Activated CD4-positive, alpha-beta memory T cell treated with anti-CD3 and anti-CD28 coated beads for 36 hours (primary cell): ENCODE measurements at regions of chr3 and their contacts with region 1.

Region 1: DNA sequence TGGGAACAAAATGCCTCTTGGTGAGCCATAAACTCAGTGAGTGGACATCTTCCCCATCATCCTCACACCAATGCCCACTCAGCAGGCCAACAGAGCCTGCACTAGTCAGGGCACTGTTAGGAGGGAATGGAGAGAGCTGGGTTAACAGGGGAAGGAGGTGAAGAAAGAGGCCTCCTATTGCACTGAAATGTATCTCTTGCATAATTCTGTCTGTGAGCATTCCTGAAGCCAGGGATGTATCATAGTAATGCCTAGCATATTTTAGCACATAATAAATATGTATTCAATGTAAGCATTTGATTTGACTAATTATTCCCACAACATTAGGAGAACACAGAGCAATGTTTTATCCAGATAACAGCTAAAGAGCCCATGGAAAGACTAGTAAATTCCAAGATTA is 81.2 kb downstream of the ANO10 start:
- DNase-seq: no peak
- H3K4me3 Mint-ChIP-seq: no peak overlapping the region
- H3K27ac Mint-ChIP-seq: no peak overlapping the region
- H3K4me1 Mint-ChIP-seq: no peaks in the 10 kb centered on the region
- H3K27me3 Mint-ChIP-seq: no peaks in the 10 kb centered on the region

Region 2: GRCh38 chr3:43399034-43399433 is 141.6 kb before region 1 on chr3:
- CTCF ChIA-PET with region 1: no interaction called
- POLR2A ChIA-PET with region 1: no interaction called
- intact Hi-C with region 1: no loop called
- DNase-seq: no peak
- H3K4me3 Mint-ChIP-seq: no peak overlapping the region
- H3K27ac Mint-ChIP-seq: no peak overlapping the region
- H3K4me1 Mint-ChIP-seq: peaks cover 5% of the 10 kb centered on the region
- H3K27me3 Mint-ChIP-seq: no peaks in the 10 kb centered on the region

Region 3: DNA sequence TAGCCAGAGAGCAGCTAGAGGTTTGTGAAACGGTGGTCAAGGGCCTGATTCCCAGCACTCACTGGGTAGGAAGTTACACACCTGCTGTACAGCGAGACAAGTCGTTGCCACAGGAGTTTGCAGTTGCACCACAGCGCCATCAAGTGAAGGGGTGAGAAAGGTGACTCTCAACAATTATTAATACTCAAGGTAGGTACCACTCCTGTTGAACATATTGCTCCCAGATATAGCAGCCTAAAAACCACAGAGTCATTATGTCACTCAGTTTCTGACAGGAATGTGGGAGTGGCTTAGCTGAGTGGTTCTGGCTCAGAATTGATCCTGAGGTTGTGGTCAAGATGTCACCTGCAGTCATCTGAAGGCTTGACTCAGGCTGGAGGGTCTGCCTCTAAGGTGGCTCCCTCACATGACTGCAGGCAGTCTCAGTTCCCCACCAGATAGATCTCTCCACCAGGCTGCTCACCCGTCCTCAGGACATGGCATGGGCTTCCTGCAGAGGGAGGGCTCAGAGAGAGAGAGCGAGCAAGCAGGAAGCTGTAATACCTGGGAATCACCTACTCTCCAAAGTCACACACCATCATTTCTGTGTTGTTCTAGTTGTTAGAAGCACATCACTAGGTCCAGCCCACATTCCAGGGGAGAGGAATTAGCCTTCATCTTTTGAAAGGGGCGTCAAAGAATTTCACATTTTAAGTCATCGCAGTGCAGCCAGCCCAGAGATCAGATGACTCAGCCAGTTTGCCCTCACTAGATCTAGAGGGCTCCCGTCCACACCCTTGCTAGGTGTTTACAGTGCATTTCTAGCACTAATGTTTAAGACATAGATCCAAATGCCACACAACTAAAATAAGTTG is 98.2 kb after region 1 on chr3:
- CTCF ChIA-PET with region 1: interaction called, 3 read pairs
- POLR2A ChIA-PET with region 1: no interaction called
- intact Hi-C with region 1: loop called (anchors 1 kb)
- DNase-seq: peak; percentile 65
- H3K4me3 Mint-ChIP-seq: no peak overlapping the region
- H3K27ac Mint-ChIP-seq: no peak overlapping the region
- H3K4me1 Mint-ChIP-seq: peaks cover 5% of the 10 kb centered on the region
- H3K27me3 Mint-ChIP-seq: peaks cover 7% of the 10 kb centered on the region

Region 4: DNA sequence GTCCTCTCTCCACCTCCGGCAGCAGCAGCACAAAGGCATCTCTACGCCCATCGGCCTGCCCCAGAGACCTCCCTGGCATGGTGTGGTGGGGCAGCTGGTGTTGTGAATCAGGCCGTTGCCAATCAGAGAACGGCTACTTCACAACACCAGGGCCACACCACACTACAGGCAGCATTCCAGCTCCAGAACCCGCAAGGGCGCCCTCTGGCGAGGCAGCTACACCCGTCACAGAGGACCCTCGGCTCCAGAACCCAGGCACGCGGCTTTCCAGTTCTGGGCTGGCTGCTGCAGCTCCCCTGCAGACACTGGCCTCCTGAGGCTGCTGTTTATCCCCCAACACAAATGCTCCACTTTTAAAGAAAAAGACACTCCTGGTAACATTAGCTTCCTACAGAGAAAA is 573.5 kb after region 1 on chr3:
- CTCF ChIA-PET with region 1: interaction called, 3 read pairs
- POLR2A ChIA-PET with region 1: no interaction called
- intact Hi-C with region 1: loop called (anchors 10 kb)
- DNase-seq: peak; percentile 52
- H3K4me3 Mint-ChIP-seq: no peak overlapping the region
- H3K27ac Mint-ChIP-seq: no peak overlapping the region
- H3K4me1 Mint-ChIP-seq: no peaks in the 10 kb centered on the region
- H3K27me3 Mint-ChIP-seq: peaks cover 14% of the 10 kb centered on the region